Sigmoid colon (tissue), 7 donors: ENCODE measurements at regions of chr11 and their contacts with region 1.

Region 1: GRCh38 chr11:3854977-3855807 is at the start of gene STIM1:
- DNase-seq: peak; percentile 97
- H3K4me3 ChIP-seq: peak within 1 kb of the TSS; percentile 83 to 95 (median 92)
- H3K27ac ChIP-seq: peak within 1 kb of the TSS; percentile 91 to 100 (median 99)
- H3K4me1 ChIP-seq: peaks cover 0 to 50% (median 46%) of the 10 kb centered on the region in 4 donors
- H3K27me3 ChIP-seq: no peaks in the 10 kb centered on the region
- CTCF ChIP-seq: peak; percentile 94 to 99 (median 97)
- EP300 ChIP-seq: no peak
- POLR2A ChIP-seq: peak; percentile 77 to 79
- total RNA-seq, gene STIM1: 24.7 to 37.4 (median 30.4) TPM

Region 2: DNA sequence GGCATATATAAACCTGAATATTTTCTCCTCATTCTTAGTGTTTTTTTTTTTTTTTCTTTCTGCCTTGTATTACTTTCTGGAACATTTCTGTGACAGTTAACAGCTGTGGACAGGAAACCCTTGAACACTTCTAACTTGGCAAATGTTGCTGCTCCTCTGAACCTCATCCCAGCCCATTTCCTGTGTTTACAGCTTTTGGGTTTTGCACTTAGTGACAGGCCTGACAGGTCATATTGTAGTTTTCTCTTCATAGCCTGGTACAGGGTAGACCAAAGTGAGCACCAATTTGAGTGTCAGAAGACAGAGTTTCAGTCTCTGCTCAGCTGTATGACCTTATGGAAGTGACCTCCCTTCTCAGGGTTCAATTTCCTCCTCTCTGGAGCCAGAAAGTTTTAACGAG is 91.9 kb after region 1 on chr11:
- intact Hi-C with region 1: loop called (anchors 5 kb)
- DNase-seq: peak; percentile 71
- H3K4me3 ChIP-seq: no peak overlapping the region
- H3K27ac ChIP-seq: peak overlapping the region; percentile 71 to 83 (median 75)
- H3K4me1 ChIP-seq: peaks cover 0 to 79% (median 66%) of the 10 kb centered on the region in 4 donors
- H3K27me3 ChIP-seq: no peaks in the 10 kb centered on the region
- CTCF ChIP-seq: no peak
- EP300 ChIP-seq: no peak
- POLR2A ChIP-seq: no peak

Region 3: GRCh38 chr11:3989276-3989920 is 134.2 kb after region 1 on chr11:
- intact Hi-C with region 1: no loop called
- DNase-seq: peak; percentile 70
- H3K4me3 ChIP-seq: peak overlapping the region in 3 of 4 donors; percentile 4 to 31 (median 23)
- H3K27ac ChIP-seq: peak overlapping the region in 3 of 4 donors; percentile 17 to 60 (median 46)
- H3K4me1 ChIP-seq: peaks cover 0 to 59% (median 30%) of the 10 kb centered on the region in 4 donors
- H3K27me3 ChIP-seq: no peaks in the 10 kb centered on the region
- CTCF ChIP-seq: no peak
- EP300 ChIP-seq: no peak
- POLR2A ChIP-seq: no peak

Region 4: DNA sequence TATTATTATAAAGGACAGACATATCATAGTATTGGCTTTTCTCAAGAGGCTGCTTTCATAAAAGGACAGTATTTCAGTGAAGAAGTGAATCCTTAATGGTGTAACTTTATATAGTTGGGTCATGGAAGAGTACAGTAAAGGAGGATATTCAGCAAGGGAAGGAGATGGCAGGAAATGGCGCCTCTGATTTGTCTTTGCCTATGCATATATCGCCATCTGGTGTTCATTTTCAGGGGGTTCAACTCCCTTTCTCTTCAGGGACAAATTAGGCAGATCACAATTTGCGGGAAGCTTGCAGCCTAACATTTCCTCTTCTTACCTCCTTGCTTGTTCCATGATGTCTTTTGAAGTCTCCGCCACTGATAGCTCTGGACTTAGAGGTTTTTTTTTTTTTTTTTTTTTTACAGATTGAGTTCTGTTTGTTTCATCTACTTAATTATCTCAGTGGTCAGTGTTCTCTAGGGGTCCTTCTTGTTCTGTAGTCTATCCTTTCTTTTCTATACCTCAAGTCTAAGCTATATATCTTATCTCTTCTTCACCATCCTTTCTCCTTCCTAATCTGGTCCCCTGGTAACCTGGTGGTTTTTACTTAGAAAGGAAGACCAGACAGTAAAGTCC is 217.6 kb after region 1 on chr11:
- intact Hi-C with region 1: loop called (anchors 1 kb)
- DNase-seq: peak; percentile 83
- H3K4me3 ChIP-seq: no peak overlapping the region
- H3K27ac ChIP-seq: peak overlapping the region in 1 of 4 donors; percentile 44
- H3K4me1 ChIP-seq: peaks cover 0 to 38% (median 19%) of the 10 kb centered on the region in 4 donors
- H3K27me3 ChIP-seq: no peaks in the 10 kb centered on the region
- CTCF ChIP-seq: peak; percentile 76 to 93 (median 81)
- EP300 ChIP-seq: no peak
- POLR2A ChIP-seq: no peak